HEK293T (cell line): ENCODE measurements at regions of chr3 and their contacts with region 1.

Region 1: GRCh38 chr3:62188681-62189383 is 184.5 kb downstream of the FEZF2 start:
- DNase-seq: peak; percentile 78

Region 2: DNA sequence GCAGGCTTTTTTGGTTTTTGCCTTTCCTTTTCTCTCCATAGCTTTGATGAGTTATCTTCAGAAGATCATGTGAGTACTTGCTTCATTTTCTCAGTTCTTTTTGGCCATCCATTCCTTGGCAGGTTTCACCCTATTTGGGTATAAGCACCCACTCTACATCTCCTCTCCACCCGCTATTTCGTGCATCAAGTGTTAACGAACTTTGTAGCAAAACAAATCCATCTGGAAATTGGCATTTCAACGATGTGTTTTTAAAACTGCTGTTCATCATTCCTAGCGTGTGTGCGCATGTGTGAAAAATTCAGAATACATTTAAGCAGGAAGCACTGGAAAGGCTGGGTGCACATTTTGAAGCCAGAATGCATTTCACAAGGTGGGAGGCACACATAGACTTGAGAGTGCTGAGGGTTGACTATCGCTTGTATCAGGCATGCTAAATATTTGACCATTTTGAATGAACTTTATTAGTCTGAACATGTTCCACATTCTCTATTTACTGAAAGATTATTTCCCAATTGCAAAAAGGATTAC is 847.8 kb before region 1 on chr3:
- CTCF ChIA-PET with region 1: no interaction called
- POLR2A ChIA-PET with region 1: no interaction called
- DNase-seq: no peak

Region 3: DNA sequence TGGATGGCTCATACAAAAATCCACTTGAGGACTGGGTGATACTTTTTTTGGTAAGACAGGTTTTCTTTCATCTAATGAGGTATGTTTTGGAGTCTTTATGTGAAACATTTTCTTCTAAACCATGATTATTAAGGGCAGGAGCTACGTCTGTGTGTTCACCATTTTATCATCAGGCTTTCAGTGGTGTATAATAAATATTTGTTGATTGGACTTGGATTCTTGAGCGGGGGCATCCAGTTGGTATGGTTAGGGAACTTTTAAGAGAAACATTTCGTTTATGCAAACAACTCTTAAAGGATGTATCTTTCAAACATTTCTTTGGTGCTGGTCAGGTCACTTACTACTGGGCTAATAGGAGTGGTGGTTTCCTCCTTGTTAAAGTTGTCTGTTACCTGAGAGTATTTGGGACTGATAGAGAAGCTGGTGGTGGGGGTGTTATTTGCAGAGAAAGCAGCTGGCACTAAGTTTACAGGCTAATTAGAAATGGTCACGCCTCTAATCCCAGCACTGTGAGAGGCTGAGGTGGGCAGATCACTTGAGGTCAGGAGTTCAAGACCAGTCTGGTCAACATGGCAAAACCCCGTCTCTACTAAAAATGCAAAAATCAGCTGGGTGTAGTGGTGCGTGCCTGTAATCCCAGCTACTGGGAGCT is 295.2 kb before region 1 on chr3:
- CTCF ChIA-PET with region 1: interaction called, 10 read pairs
- POLR2A ChIA-PET with region 1: no interaction called
- DNase-seq: no peak

Region 4: DNA sequence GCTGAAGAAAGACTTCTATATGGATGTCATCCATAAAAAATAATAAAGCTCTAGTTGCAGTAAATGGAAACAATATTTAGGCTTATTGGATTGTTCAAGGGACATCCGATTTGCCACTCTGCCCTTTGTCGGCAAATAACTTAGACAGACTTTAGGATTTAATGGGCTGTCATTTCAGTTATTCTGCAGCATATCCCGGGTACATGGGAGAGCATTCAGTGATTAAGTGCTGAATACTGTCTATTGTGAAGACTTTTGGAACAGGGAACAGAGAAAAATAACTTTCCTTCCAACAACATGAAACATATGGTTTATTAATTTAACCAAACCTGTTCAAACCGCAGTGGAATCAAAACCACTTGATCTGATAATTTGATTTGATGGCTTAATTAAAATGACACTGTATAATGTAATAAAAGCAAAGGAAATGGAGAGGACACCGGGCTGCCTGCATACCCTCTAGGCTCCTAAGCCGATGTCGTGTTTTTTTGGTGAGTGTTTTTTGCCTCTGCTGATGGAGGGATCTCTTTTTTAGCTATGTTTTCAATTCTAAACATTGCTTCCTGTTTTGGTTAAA is 14.8 kb before region 1 on chr3:
- CTCF ChIA-PET with region 1: no interaction called
- POLR2A ChIA-PET with region 1: no interaction called
- DNase-seq: no peak

Region 5: GRCh38 chr3:62229920-62230319 is 41.1 kb after region 1 on chr3:
- CTCF ChIA-PET with region 1: no interaction called
- POLR2A ChIA-PET with region 1: no interaction called
- DNase-seq: peak; percentile 44